Right ventricle myocardium superior (tissue), 1 donor: ENCODE measurements at regions of chr2 and their contacts with region 1.

Region 1: GRCh38 chr2:65382776-65383357 is 49.5 kb downstream of the SPRED2 start:
- DNase-seq: peak; percentile 84
- ATAC-seq: peak; percentile 79

Region 2: GRCh38 chr2:65416945-65417344 is 34.1 kb after region 1 on chr2:
- intact Hi-C with region 1: loop called (anchors 5 kb)
- DNase-seq: no peak
- ATAC-seq: no peak